ENCODE measurements at regions of chr7 and their contacts with region 1.

Region 1: GRCh38 chr7:152709287-152710152 is 33.6 kb upstream of the XRCC2 start:
- DNase-seq: no peak
- H3K4me3 ChIP-seq: no peak overlapping the region
- H3K27ac ChIP-seq: no peak overlapping the region
- H3K4me1 ChIP-seq: no peaks in the 10 kb centered on the region
- CTCF ChIP-seq: no peak

Region 2: DNA sequence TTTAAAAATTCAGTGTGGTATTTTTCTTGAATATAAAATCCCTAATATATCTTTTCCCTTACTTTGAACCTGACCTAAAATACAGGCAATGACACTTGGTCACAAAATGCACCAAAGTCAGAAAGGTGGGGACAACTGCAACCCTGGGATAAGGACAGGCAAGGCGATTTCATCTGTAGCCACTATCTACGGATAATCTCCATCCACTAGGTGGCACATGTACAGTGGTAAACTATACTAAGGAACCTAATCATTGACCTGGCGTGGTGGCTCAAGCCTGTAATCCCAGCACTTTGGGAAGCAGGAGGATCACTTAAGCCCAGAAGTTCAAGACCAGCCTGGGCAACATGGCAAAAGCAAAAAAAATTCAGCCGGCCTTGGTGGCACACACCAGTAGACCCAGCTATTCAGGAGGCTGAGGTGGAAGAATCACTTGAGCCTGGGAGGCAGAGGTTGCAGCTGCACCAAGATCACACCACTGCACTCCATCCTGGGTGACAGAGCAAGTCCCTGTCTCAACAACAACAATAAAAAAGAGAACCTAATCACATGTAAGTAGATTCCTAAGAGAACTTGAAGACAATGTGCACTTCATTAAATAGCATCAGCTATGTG is 372.7 kb before region 1 on chr7:
- CTCF ChIA-PET with region 1: no interaction called
- POLR2A ChIA-PET with region 1: no interaction called
- intact Hi-C with region 1: loop called (anchors 5 kb)
- DNase-seq: peak; percentile 70
- H3K4me3 ChIP-seq: no peak overlapping the region
- H3K27ac ChIP-seq: peak overlapping the region; percentile 51
- H3K4me1 ChIP-seq: peaks cover 81% of the 10 kb centered on the region
- CTCF ChIP-seq: peak; percentile 91

Region 3: DNA sequence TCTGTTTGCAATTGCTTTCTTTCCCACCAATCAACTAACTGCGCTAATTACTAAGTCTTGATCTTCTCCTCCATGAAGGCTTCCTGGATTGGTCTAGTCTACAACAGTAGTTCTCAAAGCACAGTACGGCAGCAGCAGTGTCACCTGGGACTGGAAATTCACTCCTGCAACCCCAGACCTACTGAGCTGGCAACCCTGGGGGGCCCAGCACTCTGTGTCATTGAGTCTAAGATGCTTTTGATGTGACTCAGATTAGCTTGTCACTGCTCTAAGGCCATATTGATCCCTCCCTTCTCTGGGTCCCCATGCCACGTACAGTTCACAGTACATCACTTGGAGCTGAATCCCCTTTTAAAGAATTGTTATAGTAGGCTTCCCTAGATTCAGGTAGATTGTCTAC is 208.0 kb before region 1 on chr7:
- CTCF ChIA-PET with region 1: no interaction called
- POLR2A ChIA-PET with region 1: no interaction called
- intact Hi-C with region 1: no loop called
- DNase-seq: no peak
- H3K4me3 ChIP-seq: no peak overlapping the region
- H3K27ac ChIP-seq: no peak overlapping the region
- H3K4me1 ChIP-seq: no peaks in the 10 kb centered on the region
- CTCF ChIP-seq: no peak

Measured in OCI-LY7 (cell line).